RWPE1 (cell line): ENCODE measurements at regions of chr10 and their contacts with region 1.

Region 1: GRCh38 chr10:113521123-113521795 is 31.6 kb upstream of the HABP2 start:
- DNase-seq: peak; percentile 77
- H3K27ac ChIP-seq: no peak overlapping the region
- CTCF ChIP-seq: peak; percentile 97

Region 2: DNA sequence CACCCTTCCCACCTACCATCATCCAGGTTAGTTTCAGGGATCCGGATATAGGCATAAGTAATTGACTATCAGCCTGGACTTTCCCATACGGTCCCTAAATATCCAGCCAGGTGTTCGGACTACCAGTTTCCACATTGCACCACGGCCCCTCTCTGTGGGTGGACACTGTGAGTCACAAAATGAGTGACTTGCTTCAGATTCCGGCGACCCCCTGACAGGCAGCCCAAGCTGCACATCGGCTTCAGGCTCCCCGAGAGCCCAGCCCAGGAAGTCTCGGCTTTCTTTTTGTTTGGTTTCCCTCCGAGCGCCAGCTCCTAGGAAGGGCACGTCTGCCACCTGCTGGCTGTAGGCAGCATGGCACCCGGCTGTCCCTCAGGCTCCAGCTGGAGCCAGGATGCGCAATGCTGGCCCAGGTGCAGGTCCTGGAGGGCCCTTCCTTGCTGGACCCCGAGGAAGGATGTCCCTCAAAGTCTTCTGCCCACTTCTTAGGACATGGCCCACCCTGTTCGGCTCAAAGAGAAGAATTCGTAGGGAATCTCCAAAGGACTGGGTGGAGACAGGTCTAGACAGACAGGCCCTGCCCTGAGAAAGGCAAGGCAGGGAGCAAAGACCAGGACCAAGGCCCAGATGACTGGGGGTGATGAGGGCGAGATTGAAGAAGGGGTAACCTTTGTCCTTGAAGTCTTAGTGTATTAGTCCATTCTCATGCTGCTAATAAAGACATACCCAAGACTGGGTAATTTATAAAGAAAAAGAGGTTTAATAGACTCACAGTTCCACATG is 42.2 kb after region 1 on chr10:
- CTCF ChIA-PET with region 1: interaction called, 21 read pairs
- POLR2A ChIA-PET with region 1: no interaction called
- DNase-seq: peak; percentile 82
- H3K27ac ChIP-seq: no peak overlapping the region
- CTCF ChIP-seq: peak; percentile 97

Region 3: GRCh38 chr10:113603057-113603768 is 82.0 kb after region 1 on chr10:
- CTCF ChIA-PET with region 1: no interaction called
- POLR2A ChIA-PET with region 1: no interaction called
- DNase-seq: no peak
- H3K27ac ChIP-seq: no peak overlapping the region
- CTCF ChIP-seq: no peak